ENCODE measurements at regions of chr10 and their contacts with region 1.

Region 1: DNA sequence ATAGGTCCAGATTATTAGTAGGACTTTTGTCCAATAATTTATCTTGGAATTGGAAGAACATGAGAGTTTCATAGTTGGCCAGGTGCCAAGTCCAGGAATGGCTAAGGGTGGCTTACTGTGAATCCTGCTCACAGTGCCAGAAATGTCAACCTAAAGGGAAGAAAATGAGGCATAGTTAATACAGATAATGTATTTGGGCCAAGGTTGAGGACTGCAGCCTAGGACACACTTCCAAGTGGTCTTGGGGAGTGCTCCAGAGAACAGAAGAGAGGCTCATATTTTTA is 78.2 kb downstream of the MAPK8 start:
- DNase-seq: no peak
- ATAC-seq: no peak
- H3K4me3 Mint-ChIP-seq: no peak overlapping the region
- H3K27ac Mint-ChIP-seq: peak overlapping the region; percentile 53; the same call in 1 of the 2 replicates
- H3K4me1 Mint-ChIP-seq: peaks cover 19% of the 10 kb centered on the region
- H3K27me3 Mint-ChIP-seq: no peaks in the 10 kb centered on the region; the same call in 1 of the 2 replicates
- CTCF ChIP-seq: no peak

Region 2: GRCh38 chr10:48353246-48353645 is 31.4 kb before region 1 on chr10:
- CTCF ChIA-PET with region 1: no interaction called
- POLR2A ChIA-PET with region 1: no interaction called
- DNase-seq: no peak
- ATAC-seq: no peak
- H3K4me3 Mint-ChIP-seq: no peak overlapping the region
- H3K27ac Mint-ChIP-seq: no peak overlapping the region
- H3K4me1 Mint-ChIP-seq: no peaks in the 10 kb centered on the region
- H3K27me3 Mint-ChIP-seq: no peaks in the 10 kb centered on the region
- CTCF ChIP-seq: no peak

Region 3: DNA sequence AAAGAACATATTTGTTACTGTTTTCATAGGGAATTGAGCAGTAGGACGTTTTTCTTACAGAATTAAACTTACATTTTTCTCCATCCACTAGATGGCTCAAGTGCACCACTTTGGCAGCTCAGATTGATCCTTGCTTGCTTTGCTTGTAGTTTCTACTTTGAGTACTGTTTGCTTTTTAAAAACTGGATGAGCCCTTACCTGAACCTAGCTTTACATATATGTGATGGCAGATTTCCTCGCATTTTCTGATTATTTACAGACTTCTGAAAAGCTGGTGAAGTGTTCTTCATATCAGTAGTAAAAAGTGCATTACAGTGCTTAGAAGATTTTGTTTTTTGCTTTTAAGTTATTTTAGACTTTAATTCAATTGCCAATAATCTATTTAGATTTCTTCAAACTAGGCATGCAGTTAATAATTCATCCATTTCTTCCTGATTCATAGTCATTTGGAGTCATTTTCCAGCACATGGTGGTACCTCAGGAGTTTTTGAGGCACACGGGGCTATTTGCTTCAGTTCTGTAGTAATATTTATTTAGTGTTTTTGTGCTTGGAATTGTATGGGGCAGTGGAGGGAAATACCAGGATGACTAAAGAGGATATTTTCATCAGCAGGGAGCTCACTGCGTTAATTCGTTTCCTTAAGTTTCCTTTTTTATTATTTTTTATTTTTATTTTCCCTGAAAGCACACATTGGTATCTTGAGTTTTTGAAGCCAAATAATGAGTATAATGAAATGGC is 20.9 kb before region 1 on chr10:
- CTCF ChIA-PET with region 1: interaction called, 17 read pairs
- POLR2A ChIA-PET with region 1: no interaction called
- DNase-seq: no peak
- ATAC-seq: peak; percentile 41
- H3K4me3 Mint-ChIP-seq: no peak overlapping the region
- H3K27ac Mint-ChIP-seq: no peak overlapping the region
- H3K4me1 Mint-ChIP-seq: peaks cover 17% of the 10 kb centered on the region
- H3K27me3 Mint-ChIP-seq: no peaks in the 10 kb centered on the region
- CTCF ChIP-seq: no peak

Measured in WTC11 (cell line).